ENCODE measurements at regions of chr19 and their contacts with region 1.

Region 1: DNA sequence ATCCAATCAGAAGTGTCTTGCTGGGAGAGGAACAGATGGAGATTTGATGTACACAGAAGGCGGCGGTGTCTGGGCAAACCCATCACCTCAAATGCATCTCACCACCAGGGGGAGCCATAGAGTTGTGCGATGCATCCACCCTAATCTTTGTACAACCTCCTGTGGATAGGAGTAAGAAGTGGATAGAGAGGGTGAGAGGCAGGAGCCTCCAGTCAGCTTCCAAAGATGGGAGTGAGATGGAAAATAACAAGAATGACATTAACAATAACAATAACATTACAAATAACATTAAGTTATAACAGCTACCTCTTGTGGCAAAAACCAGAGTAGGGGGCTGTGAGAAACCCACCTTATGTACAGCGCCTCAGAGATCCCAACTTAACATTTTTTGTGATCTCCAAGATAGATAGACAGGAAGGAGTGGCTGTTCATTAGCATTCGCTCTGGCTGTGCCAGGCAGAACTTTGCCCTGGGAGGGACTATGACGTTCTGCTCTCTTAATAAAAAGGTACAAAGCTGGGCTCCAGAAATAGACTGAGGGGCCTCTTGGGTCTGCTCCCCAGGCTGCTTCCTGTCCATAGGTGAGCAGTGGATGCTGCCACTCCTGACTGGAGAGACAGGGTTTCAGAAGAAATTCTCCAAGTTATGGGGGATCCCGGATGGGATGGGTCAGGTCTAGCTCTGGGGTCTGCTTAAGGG is 5.2 kb upstream of the CEACAM18 start:
- DNase-seq: peak in 8 of 10 donors; percentile 43 to 91 (median 76)

Region 2: DNA sequence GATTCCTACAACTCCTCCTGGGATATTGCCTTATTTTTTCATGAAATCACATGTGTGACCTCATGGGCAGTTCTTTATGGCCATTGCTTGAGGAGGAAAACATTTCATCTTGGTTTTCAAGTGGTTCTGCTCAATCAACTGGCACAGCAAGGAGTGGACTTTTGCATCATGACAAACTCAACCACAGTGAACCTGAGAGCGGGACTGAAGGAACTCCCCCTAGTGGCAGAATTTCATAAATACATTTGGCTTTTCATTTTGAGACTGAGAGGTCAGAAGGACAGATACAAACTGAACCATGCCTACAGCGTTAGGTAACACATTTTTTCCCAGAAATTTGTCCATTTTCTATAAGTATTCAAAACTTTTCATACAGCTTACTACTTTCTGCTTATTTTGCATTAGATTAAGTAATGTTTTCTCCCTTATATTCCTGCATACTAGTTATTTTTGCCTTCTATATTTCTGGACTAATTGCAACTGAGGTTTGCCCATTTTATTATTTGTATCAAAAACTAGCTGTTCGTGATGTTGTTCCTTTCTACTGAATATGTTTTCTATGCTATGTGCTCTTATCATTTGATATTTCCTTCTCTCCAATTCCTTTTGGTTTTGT is 41.8 kb after region 1 on chr19:
- intact Hi-C with region 1: loop called (anchors 1 kb)
- DNase-seq: no peak

Region 3: GRCh38 chr19:51531349-51532315 is 58.5 kb after region 1 on chr19 and contains the start of gene SIGLEC6:
- intact Hi-C with region 1: no loop called
- DNase-seq: peak in 4 of 10 donors; percentile 25 to 87 (median 38)

Region 4: GRCh38 chr19:51660975-51661600 is 187.9 kb after region 1 on chr19:
- intact Hi-C with region 1: loop called (anchors 2 kb)
- DNase-seq: peak; percentile 50 to 96 (median 85)

Region 5: GRCh38 chr19:51777570-51778462 is 304.7 kb after region 1 on chr19:
- intact Hi-C with region 1: loop called (anchors 5 kb)
- DNase-seq: peak in 8 of 10 donors; percentile 32 to 91 (median 56)

Measured in posterior cingulate gyrus (tissue), 11 donors.